WTC11 (cell line): ENCODE measurements at regions of chr2 and their contacts with region 1.

Region 1: DNA sequence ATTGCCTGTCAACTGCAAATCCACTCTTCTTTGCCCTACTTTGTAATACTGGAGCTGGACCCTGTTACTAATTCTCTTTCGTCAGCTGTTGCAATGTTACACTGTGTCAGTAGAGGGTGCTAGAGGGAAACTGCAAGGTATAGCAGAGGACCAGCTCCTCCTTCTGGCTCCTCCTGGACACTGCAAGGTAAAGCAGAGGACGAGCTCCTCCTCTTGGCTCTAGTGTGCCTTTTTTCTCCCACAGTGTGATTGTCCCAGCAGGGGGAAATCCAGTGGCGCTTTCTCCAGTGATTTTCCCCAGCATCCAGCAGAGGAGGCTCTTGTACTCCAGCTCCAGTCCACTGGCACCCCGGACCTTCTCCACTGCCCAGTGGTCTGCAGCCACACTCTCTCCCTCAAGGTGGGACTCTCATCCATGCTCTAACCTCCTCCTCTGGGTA is 95.6 kb downstream of the CAPN13 start:
- DNase-seq: peak; percentile 94
- ATAC-seq: peak; percentile 84
- H3K4me3 Mint-ChIP-seq: no peak overlapping the region
- H3K27ac Mint-ChIP-seq: no peak overlapping the region
- H3K4me1 Mint-ChIP-seq: no peaks in the 10 kb centered on the region
- H3K27me3 Mint-ChIP-seq: no peaks in the 10 kb centered on the region; the same call in 1 of the 2 replicates
- CTCF ChIP-seq: peak; percentile 98

Region 2: GRCh38 chr2:30208452-30208851 is 503.2 kb before region 1 on chr2:
- CTCF ChIA-PET with region 1: interaction called, 62 read pairs
- POLR2A ChIA-PET with region 1: no interaction called
- DNase-seq: peak; percentile 59
- ATAC-seq: peak; percentile 99
- H3K4me3 Mint-ChIP-seq: no peak overlapping the region
- H3K27ac Mint-ChIP-seq: no peak overlapping the region
- H3K4me1 Mint-ChIP-seq: peaks cover 6% of the 10 kb centered on the region
- H3K27me3 Mint-ChIP-seq: no peaks in the 10 kb centered on the region
- CTCF ChIP-seq: peak; percentile 82

Region 3: DNA sequence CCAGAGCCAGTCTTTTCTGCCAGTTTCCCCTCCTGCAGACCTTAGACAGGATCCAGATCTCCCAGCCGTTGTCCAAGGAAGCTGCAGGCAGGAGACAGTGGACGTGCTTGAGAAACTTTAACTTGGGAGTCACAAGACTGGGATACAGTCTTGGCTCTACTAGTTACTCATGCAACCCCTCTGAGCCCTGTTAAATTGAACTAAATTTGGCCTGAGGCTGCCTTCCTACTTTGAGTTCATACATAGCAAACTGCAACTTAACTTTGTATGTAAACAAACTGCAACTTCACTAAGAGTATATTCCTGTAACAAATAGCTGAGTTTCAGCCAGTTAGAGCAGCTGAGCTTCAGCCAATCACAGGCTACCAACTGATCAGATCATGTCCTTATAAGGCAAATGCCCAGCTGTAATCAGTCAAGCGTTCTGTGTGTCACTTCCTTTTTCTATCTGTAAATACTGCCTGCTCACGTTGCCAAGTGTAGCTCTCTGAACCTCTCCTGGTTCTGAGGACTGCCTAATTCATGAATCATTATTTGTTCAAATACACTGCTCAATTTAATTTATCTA is 45.3 kb before region 1 on chr2:
- CTCF ChIA-PET with region 1: interaction called, 10 read pairs
- POLR2A ChIA-PET with region 1: no interaction called
- DNase-seq: no peak
- ATAC-seq: peak; percentile 54
- H3K4me3 Mint-ChIP-seq: no peak overlapping the region
- H3K27ac Mint-ChIP-seq: 0 out of 2 replicates have a peak overlapping the region, but pooled peaks have one; percentile 32
- H3K4me1 Mint-ChIP-seq: no peaks in the 10 kb centered on the region
- H3K27me3 Mint-ChIP-seq: peaks cover 4% of the 10 kb centered on the region; the same call in 1 of the 2 replicates
- CTCF ChIP-seq: no peak

Region 4: GRCh38 chr2:30862054-30862651 is 150.5 kb after region 1 on chr2:
- CTCF ChIA-PET with region 1: interaction called, 60 read pairs
- POLR2A ChIA-PET with region 1: no interaction called
- DNase-seq: peak; percentile 65
- ATAC-seq: peak; percentile 76
- H3K4me3 Mint-ChIP-seq: no peak overlapping the region
- H3K27ac Mint-ChIP-seq: no peak overlapping the region
- H3K4me1 Mint-ChIP-seq: no peaks in the 10 kb centered on the region
- H3K27me3 Mint-ChIP-seq: no peaks in the 10 kb centered on the region
- CTCF ChIP-seq: peak; percentile 60; the same call in 1 of the 2 replicates

Region 5: DNA sequence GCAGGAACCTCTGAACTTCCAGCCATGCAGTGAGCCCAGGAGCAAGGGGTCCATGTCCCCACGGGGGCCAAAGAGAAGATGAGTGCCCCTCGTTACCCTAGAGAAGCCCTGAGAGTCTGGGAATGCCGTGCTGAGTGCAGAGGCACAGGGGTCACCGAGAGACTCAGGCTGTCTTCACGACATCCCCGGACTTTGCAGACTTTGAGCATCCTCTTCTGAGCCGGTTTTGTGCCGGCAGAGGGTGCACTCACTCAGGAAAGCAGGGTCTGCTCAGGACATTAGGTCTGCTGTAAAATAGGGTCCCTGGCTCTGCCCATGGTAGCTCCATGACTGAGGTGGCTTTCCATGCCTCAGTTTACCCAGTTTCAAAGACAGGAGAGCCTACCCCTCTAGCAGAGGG is 355.6 kb after region 1 on chr2:
- CTCF ChIA-PET with region 1: interaction called, 10 read pairs
- POLR2A ChIA-PET with region 1: no interaction called
- DNase-seq: peak; percentile 19
- ATAC-seq: peak; percentile 53
- H3K4me3 Mint-ChIP-seq: no peak overlapping the region
- H3K27ac Mint-ChIP-seq: no peak overlapping the region
- H3K4me1 Mint-ChIP-seq: peaks cover 14% of the 10 kb centered on the region
- H3K27me3 Mint-ChIP-seq: no peaks in the 10 kb centered on the region
- CTCF ChIP-seq: no peak

Region 6: GRCh38 chr2:31233741-31234682 is 522.3 kb after region 1 on chr2 and contains the start of gene EHD3:
- CTCF ChIA-PET with region 1: interaction called, 12 read pairs
- POLR2A ChIA-PET with region 1: no interaction called
- DNase-seq: peak; percentile 97
- ATAC-seq: peak; percentile 98
- H3K4me3 Mint-ChIP-seq: peak within 1 kb of the TSS; percentile 74
- H3K27ac Mint-ChIP-seq: no peak within 1 kb of the TSS
- H3K4me1 Mint-ChIP-seq: peaks cover 20% of the 10 kb centered on the region
- H3K27me3 Mint-ChIP-seq: peaks cover 11% of the 10 kb centered on the region
- CTCF ChIP-seq: peak; percentile 57; the same call in 1 of the 2 replicates
- total RNA-seq, gene EHD3: 9.8 to 10.2 TPM (median 10.0 TPM) in 3 replicates